GM12878 (cell line): ENCODE measurements at regions of chr6 and their contacts with region 1.

Region 1: DNA sequence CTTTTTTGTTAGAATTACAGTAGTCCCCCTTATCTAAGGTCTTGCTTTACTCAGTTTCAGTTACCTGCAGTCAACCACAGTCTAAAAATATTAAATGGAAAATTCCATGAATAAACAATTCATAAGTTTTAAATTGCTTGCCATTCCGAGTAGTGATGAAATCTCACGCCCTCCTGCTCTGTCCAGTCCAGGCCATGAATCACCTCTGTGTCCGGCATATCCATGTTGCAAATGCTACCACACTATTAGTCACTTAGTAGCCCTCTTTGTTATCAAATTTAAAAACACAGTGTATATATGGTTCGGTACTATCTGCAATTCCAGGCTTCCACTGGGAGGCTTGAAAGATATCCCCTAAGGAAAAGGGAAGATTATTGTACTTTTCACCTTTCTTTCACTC is 164.6 kb upstream of the FAM83B start:
- DNase-seq: no peak
- ATAC-seq: peak; percentile 34
- H3K4me3 ChIP-seq: no peak overlapping the region
- H3K27ac ChIP-seq: no peak overlapping the region
- H3K4me1 ChIP-seq: no peaks in the 10 kb centered on the region
- H3K27me3 ChIP-seq: no peaks in the 10 kb centered on the region
- CTCF ChIP-seq: no peak
- EP300 ChIP-seq: no peak
- POLR2A ChIP-seq: no peak
- RAD21 ChIP-seq: no peak

Region 2: GRCh38 chr6:54431466-54431865 is 250.5 kb before region 1 on chr6:
- CTCF ChIA-PET with region 1: no interaction called
- POLR2A ChIA-PET with region 1: no interaction called
- RAD21 ChIA-PET with region 1: no interaction called
- SMC1A ChIA-PET with region 1: no interaction called
- in situ Hi-C with region 1: no loop called
- intact Hi-C with region 1: no loop called
- DNase-seq: no peak
- ATAC-seq: peak; percentile 35; the same call in 1 of the 3 replicates
- H3K4me3 ChIP-seq: no peak overlapping the region
- H3K27ac ChIP-seq: no peak overlapping the region
- H3K4me1 ChIP-seq: peaks cover 11% of the 10 kb centered on the region
- H3K27me3 ChIP-seq: no peaks in the 10 kb centered on the region
- CTCF ChIP-seq: no peak
- EP300 ChIP-seq: no peak
- POLR2A ChIP-seq: no peak
- RAD21 ChIP-seq: no peak

Region 3: GRCh38 chr6:54697424-54697823 is 15.4 kb after region 1 on chr6:
- CTCF ChIA-PET with region 1: interaction called, 11 read pairs
- POLR2A ChIA-PET with region 1: interaction called, 7 read pairs
- RAD21 ChIA-PET with region 1: interaction called, 18 read pairs
- SMC1A ChIA-PET with region 1: interaction called, 12 read pairs
- in situ Hi-C with region 1: no loop called
- intact Hi-C with region 1: no loop called
- DNase-seq: no peak
- ATAC-seq: no peak
- H3K4me3 ChIP-seq: no peak overlapping the region
- H3K27ac ChIP-seq: no peak overlapping the region
- H3K4me1 ChIP-seq: no peaks in the 10 kb centered on the region
- H3K27me3 ChIP-seq: no peaks in the 10 kb centered on the region
- CTCF ChIP-seq: peak in 2 of 3 experiments; percentile 11 to 37; a peak in 3 of 6 replicates
- EP300 ChIP-seq: no peak
- POLR2A ChIP-seq: no peak
- RAD21 ChIP-seq: peak; percentile 52

Region 4: GRCh38 chr6:54801669-54802068 is 119.7 kb after region 1 on chr6:
- CTCF ChIA-PET with region 1: no interaction called
- POLR2A ChIA-PET with region 1: no interaction called
- RAD21 ChIA-PET with region 1: no interaction called
- SMC1A ChIA-PET with region 1: no interaction called
- in situ Hi-C with region 1: no loop called
- intact Hi-C with region 1: no loop called
- DNase-seq: no peak
- ATAC-seq: no peak
- H3K4me3 ChIP-seq: no peak overlapping the region
- H3K27ac ChIP-seq: no peak overlapping the region
- H3K4me1 ChIP-seq: no peaks in the 10 kb centered on the region
- H3K27me3 ChIP-seq: no peaks in the 10 kb centered on the region
- CTCF ChIP-seq: no peak
- EP300 ChIP-seq: no peak
- POLR2A ChIP-seq: no peak
- RAD21 ChIP-seq: no peak

Region 5: DNA sequence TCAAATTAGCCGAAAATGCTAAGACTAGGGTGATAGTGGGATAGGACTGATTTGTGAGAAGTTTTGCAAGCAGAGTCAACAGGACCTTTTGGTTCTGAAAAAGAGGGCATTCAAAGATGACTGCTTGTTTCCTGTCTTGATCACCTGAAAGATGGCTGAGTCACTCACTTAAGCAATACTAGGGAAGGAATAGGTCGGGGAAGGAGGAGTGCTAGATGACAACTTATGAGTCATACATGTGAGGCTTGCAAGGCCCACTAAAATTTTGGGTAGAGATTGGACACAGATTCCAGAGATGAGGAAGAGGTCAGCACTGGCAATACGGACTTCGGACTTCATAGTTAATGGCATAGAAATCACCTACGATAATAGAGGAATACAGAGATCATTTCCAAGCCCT is 253.8 kb after region 1 on chr6:
- CTCF ChIA-PET with region 1: no interaction called
- POLR2A ChIA-PET with region 1: no interaction called
- RAD21 ChIA-PET with region 1: no interaction called
- SMC1A ChIA-PET with region 1: no interaction called
- in situ Hi-C with region 1: no loop called
- intact Hi-C with region 1: no loop called
- DNase-seq: no peak
- ATAC-seq: no peak
- H3K4me3 ChIP-seq: no peak overlapping the region
- H3K27ac ChIP-seq: no peak overlapping the region
- H3K4me1 ChIP-seq: no peaks in the 10 kb centered on the region
- H3K27me3 ChIP-seq: no peaks in the 10 kb centered on the region
- CTCF ChIP-seq: no peak
- EP300 ChIP-seq: no peak
- POLR2A ChIP-seq: no peak
- RAD21 ChIP-seq: no peak